ENCODE measurements at regions of chr9 and their contacts with region 1.

Region 1: GRCh38 chr9:21326526-21327139 is 8.6 kb downstream of the KLHL9 start:
- DNase-seq: peak; percentile 63
- ATAC-seq: peak; percentile 72
- H3K4me3 ChIP-seq: no peak overlapping the region
- H3K27ac ChIP-seq: no peak overlapping the region
- H3K4me1 ChIP-seq: peaks cover 10% of the 10 kb centered on the region
- H3K27me3 ChIP-seq: no peaks in the 10 kb centered on the region
- CTCF ChIP-seq: peak; percentile 76

Region 2: DNA sequence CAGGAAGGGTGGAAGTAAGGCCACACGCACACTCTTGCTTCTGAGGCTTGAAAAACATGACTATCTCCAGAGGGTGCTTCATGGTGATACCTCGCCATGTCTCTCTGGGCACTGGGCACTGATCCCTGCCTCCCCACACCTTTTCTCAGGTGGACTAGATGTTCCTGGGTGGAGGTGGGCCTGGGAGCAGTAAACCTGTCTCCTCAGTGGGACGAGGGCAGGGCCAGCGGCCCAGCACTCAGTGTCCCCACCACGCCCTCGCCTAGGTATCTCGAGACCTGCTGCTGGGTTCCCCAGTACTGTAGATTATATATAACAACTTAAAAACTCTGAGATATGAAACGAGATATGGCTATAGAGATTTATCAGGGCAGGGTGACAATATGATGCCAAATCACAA is 35.7 kb after region 1 on chr9:
- CTCF ChIA-PET with region 1: no interaction called
- POLR2A ChIA-PET with region 1: no interaction called
- intact Hi-C with region 1: no loop called
- DNase-seq: no peak
- ATAC-seq: no peak
- H3K4me3 ChIP-seq: no peak overlapping the region
- H3K27ac ChIP-seq: no peak overlapping the region
- H3K4me1 ChIP-seq: no peaks in the 10 kb centered on the region
- H3K27me3 ChIP-seq: no peaks in the 10 kb centered on the region
- CTCF ChIP-seq: no peak

Region 3: DNA sequence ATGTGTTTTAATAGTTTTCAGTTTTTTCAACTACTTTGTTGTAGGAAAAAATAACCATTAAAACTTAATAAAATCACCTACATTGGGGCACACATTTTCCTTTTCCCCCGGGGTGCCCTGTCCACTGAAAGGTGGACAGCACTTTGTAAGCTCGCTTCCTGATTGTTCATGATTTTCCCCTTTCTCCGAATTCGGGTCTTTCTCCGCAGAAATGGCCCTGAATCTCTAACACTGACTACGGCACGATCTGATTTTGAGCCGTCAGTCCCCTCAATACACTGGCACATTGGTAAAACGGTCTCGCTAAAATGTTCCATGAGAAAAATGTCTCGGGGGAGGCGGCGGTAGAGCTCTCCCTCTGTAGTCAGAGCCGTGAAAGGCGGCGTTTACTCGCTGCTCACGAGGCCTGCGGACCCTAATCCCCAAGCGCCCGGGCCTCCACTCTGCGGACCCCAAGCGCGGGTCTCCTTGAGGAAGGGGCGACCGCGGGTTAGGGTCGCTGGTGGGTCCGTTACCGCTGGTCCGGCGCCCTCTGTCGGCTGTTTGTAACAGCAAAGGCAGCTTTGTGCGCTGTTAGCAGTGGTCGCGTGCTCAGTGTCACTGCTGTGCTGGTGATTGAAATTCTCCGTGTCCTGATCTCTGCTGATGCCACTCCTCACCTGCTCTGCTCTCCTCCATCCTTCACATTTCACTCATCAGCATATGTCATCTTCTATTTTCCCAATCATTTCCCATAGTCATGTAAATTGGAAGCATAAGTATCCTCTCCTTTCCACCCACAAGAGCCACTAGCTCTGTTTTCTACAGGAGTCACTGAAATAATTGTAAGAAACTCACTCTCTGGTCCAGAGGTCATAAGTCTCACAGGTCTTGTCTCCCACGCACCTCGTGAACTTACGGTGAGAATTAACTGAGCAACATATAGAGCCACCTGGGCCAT is 69.4 kb after region 1 on chr9:
- CTCF ChIA-PET with region 1: interaction called, 29 read pairs
- POLR2A ChIA-PET with region 1: no interaction called
- intact Hi-C with region 1: loop called (anchors 1 kb)
- DNase-seq: peak; percentile 43
- ATAC-seq: peak; percentile 84
- H3K4me3 ChIP-seq: peak overlapping the region; percentile 76
- H3K27ac ChIP-seq: no peak overlapping the region
- H3K4me1 ChIP-seq: 0 out of 2 replicates have a peak, but pooled peaks cover 5% of the 10 kb centered on the region
- H3K27me3 ChIP-seq: peaks cover 3% of the 10 kb centered on the region; the same call in 1 of the 2 replicates
- CTCF ChIP-seq: peak; percentile 90

Region 4: DNA sequence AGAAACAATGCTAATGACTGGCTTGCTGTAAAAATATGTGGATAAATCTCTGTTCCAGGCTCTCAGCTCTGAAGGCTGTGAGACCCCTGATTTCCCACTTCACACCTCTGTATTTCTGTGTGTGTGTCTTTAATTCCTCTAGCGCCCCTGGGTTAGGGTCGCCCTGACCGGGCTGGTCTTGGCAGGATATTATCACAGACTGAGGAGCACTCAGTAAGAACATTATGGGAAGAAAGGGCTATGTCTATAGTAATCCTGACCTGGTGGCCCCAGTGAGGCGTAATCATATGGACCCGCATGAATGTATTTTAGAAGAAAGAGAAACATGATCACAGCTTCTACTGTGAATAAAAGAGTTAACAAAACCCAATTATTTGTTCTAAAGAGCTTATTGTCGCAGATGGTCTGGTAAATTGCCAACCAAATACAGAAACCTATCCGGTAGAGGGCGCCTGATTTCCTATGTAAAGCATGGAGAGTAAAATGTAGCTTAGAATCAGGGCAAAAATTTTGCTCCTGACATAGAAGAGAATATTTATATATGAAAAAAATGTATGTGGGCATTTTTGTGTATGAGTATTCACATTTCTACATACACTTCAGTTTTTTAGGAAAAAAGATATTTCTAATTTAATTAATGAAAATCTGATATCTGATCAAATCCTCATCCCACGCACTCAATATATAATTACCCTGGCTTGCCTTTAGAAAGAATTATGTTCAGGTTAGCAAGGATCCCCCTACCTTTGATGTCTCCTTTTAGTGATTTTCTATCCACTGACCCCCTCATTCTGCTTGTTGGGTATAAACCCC is 107.8 kb after region 1 on chr9:
- CTCF ChIA-PET with region 1: interaction called, 11 read pairs
- POLR2A ChIA-PET with region 1: no interaction called
- intact Hi-C with region 1: no loop called
- DNase-seq: peak; percentile 83
- ATAC-seq: no peak
- H3K4me3 ChIP-seq: no peak overlapping the region
- H3K27ac ChIP-seq: no peak overlapping the region
- H3K4me1 ChIP-seq: no peaks in the 10 kb centered on the region
- H3K27me3 ChIP-seq: no peaks in the 10 kb centered on the region
- CTCF ChIP-seq: peak; percentile 73

Region 5: DNA sequence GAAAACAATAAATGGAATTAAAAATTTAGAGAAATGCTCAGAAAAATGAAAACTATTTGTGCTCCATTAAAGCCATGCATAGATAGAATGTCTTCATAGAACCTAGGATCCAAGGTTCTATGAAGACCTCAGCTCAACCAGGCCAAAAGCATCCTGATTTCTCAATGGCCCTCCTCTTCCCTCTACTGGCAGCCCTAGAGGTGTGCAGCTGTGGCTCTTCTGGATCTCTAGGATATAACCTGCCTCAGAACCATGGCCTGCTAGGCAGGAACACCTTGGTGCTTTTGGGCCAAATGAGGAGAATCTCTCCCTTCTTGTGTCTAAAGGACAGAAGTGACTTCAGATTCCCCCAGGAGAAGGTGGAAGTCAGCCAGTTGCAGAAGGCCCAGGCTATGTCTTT is 128.7 kb after region 1 on chr9:
- CTCF ChIA-PET with region 1: no interaction called
- POLR2A ChIA-PET with region 1: no interaction called
- intact Hi-C with region 1: loop called (anchors 2 kb)
- DNase-seq: peak; percentile 54
- ATAC-seq: peak; percentile 77
- H3K4me3 ChIP-seq: no peak overlapping the region
- H3K27ac ChIP-seq: no peak overlapping the region
- H3K4me1 ChIP-seq: peaks cover 17% of the 10 kb centered on the region
- H3K27me3 ChIP-seq: no peaks in the 10 kb centered on the region
- CTCF ChIP-seq: peak; percentile 83

Measured in PC-3 (cell line).